ENCODE measurements at regions of chr11 and their contacts with region 1.

Region 1: GRCh38 chr11:122020902-122021301 is 95.1 kb downstream of the BLID start:
- DNase-seq: no peak
- H3K4me3 ChIP-seq: no peak overlapping the region
- H3K27ac ChIP-seq: no peak overlapping the region
- H3K4me1 ChIP-seq: no peaks in the 10 kb centered on the region
- H3K27me3 ChIP-seq: no peaks in the 10 kb centered on the region
- CTCF ChIP-seq: peak in 2 of 4 experiments; percentile 10 to 23
- POLR2A ChIP-seq: no peak

Region 2: GRCh38 chr11:121655537-121656327 is 365.2 kb before region 1 on chr11:
- intact Hi-C with region 1: loop called (anchors 10 kb)
- DNase-seq: peak; percentile 81
- H3K4me3 ChIP-seq: peak overlapping the region; percentile 26 to 31
- H3K27ac ChIP-seq: peak overlapping the region; percentile 80 to 84
- H3K4me1 ChIP-seq: no peaks in the 10 kb centered on the region
- H3K27me3 ChIP-seq: no peaks in the 10 kb centered on the region
- CTCF ChIP-seq: peak; percentile 74 to 95 (median 83)
- POLR2A ChIP-seq: no peak

Region 3: GRCh38 chr11:121800731-121801393 is 220.0 kb before region 1 on chr11:
- intact Hi-C with region 1: no loop called
- DNase-seq: no peak
- H3K4me3 ChIP-seq: no peak overlapping the region
- H3K27ac ChIP-seq: peak overlapping the region in 1 of 2 donors; percentile 9
- H3K4me1 ChIP-seq: no peaks in the 10 kb centered on the region
- H3K27me3 ChIP-seq: no peaks in the 10 kb centered on the region
- CTCF ChIP-seq: no peak
- POLR2A ChIP-seq: no peak

Region 4: GRCh38 chr11:122242731-122243130 is 221.8 kb after region 1 on chr11:
- intact Hi-C with region 1: no loop called
- DNase-seq: no peak
- H3K4me3 ChIP-seq: no peak overlapping the region
- H3K27ac ChIP-seq: no peak overlapping the region
- H3K4me1 ChIP-seq: no peaks in the 10 kb centered on the region
- H3K27me3 ChIP-seq: no peaks in the 10 kb centered on the region
- CTCF ChIP-seq: no peak
- POLR2A ChIP-seq: no peak